Caco-2 (cell line): ENCODE measurements at regions of chr17 and their contacts with region 1.

Region 1: DNA sequence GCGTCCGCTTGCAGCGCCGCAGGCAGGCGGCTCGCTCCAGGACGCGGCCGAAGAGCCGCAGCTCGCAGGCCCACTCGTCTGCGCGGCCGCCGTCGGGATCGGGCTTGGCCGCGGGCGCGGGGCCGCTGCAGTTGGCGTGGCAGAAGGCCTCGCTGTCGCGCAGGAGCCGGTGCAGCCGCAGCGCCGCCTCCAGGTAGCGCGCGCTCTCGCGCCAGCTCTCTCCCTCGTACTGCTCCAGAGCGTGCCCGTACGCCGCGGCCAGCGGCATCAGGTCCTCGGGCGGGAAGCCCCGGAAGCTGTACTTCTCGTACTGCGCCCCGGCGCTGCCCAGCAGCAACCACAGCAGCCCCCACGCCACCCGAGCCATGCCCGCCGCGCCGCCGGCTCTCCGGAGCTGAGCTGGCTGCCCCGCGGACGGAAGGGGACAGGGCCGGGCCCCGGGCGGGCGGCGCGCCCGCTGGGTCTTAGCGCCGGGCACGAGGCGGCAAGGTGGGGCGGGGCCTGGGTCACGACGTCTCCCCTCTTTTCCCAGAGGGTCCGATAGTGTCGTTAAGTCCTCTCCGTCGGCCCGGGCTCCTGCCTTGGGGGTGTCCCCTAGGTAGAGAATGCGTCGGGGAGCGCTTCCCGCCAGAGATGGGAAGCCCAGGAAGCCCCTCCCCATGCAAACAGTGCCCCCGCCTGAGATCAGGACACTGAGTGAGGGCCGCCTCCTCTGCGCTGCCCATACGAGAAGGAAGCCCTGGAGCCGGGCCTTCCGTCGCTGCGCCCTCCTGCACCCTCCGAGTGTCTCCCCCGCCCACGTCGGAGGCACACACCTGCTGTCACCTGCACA is at the start of gene P3H4:
- DNase-seq: peak; percentile 82 to 90
- H3K4me3 ChIP-seq: peak within 1 kb of the TSS; percentile 91
- H3K4me3 Mint-ChIP-seq: peak within 1 kb of the TSS; percentile 99
- H3K27ac Mint-ChIP-seq: peak within 1 kb of the TSS; percentile 97
- H3K4me1 ChIP-seq: peaks cover 21% of the 10 kb centered on the region
- H3K4me1 Mint-ChIP-seq: peaks cover 6% of the 10 kb centered on the region
- H3K27me3 ChIP-seq: no peaks in the 10 kb centered on the region
- H3K27me3 Mint-ChIP-seq: no peaks in the 10 kb centered on the region
- CTCF ChIP-seq: peak; percentile 53 to 83
- total RNA-seq, gene P3H4: 34.1 and 39.2 TPM in 2 replicates

Region 2: DNA sequence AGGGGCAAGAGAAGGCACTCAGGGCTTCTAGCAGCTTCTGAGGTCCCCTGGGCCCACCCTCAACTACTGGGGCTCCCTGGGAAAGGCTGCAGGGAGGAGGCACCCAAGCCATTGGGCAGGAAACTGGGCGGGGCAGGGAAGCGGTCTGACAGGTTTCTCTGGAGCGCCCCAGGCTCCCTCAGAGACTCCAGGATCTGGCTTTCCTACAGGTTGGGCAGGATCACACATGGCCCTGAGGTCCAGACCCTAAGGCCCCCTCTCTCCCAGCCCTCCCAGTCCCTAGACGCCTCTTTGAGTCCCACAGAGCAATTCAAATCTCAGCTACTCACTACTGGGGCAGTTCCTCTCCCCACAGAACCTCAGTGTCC is 39.6 kb before region 1 on chr17:
- CTCF ChIA-PET with region 1: interaction called, 4 read pairs
- POLR2A ChIA-PET with region 1: interaction called, 4 read pairs
- intact Hi-C with region 1: loop called (anchors 1 kb)
- DNase-seq: peak; percentile 90 to 92
- H3K4me3 ChIP-seq: peak overlapping the region; percentile 20
- H3K4me3 Mint-ChIP-seq: peak overlapping the region; percentile 64
- H3K27ac Mint-ChIP-seq: peak overlapping the region; percentile 92
- H3K4me1 ChIP-seq: peaks cover 58% of the 10 kb centered on the region
- H3K4me1 Mint-ChIP-seq: peaks cover 41% of the 10 kb centered on the region
- H3K27me3 ChIP-seq: no peaks in the 10 kb centered on the region
- H3K27me3 Mint-ChIP-seq: no peaks in the 10 kb centered on the region
- CTCF ChIP-seq: no peak

Region 3: GRCh38 chr17:41801374-41802271 is 10.1 kb before region 1 on chr17:
- CTCF ChIA-PET with region 1: interaction called, 25 read pairs
- POLR2A ChIA-PET with region 1: interaction called, 9 read pairs
- intact Hi-C with region 1: no loop called
- DNase-seq: peak; percentile 91 to 94
- H3K4me3 ChIP-seq: peak overlapping the region; percentile 26
- H3K4me3 Mint-ChIP-seq: peak overlapping the region; percentile 83
- H3K27ac Mint-ChIP-seq: peak overlapping the region; percentile 99
- H3K4me1 ChIP-seq: peaks cover 31% of the 10 kb centered on the region
- H3K4me1 Mint-ChIP-seq: peaks cover 38% of the 10 kb centered on the region
- H3K27me3 ChIP-seq: no peaks in the 10 kb centered on the region
- H3K27me3 Mint-ChIP-seq: no peaks in the 10 kb centered on the region
- CTCF ChIP-seq: peak; percentile 97

Region 4: GRCh38 chr17:41864836-41865595 is 53.3 kb after region 1 on chr17 and contains the start of gene KLHL11:
- CTCF ChIA-PET with region 1: interaction called, 7 read pairs
- POLR2A ChIA-PET with region 1: interaction called, 6 read pairs
- intact Hi-C with region 1: loop called (anchors 1 kb)
- DNase-seq: peak; percentile 92 to 94
- H3K4me3 ChIP-seq: peak within 1 kb of the TSS; percentile 97
- H3K4me3 Mint-ChIP-seq: no peak within 1 kb of the TSS
- H3K27ac Mint-ChIP-seq: no peak within 1 kb of the TSS
- H3K4me1 ChIP-seq: peaks cover 15% of the 10 kb centered on the region
- H3K4me1 Mint-ChIP-seq: peaks cover 7% of the 10 kb centered on the region
- H3K27me3 ChIP-seq: no peaks in the 10 kb centered on the region
- H3K27me3 Mint-ChIP-seq: no peaks in the 10 kb centered on the region
- CTCF ChIP-seq: no peak
- total RNA-seq, gene KLHL11: 20.3 and 22.2 TPM in 2 replicates

Region 5: GRCh38 chr17:41930009-41930832 is 118.5 kb after region 1 on chr17 and contains the start of gene ODAD4:
- CTCF ChIA-PET with region 1: interaction called, 13 read pairs
- POLR2A ChIA-PET with region 1: interaction called, 5 read pairs
- intact Hi-C with region 1: no loop called
- DNase-seq: peak; percentile 97 to 98
- H3K4me3 ChIP-seq: peak within 1 kb of the TSS; percentile 41
- H3K4me3 Mint-ChIP-seq: peak within 1 kb of the TSS; percentile 97
- H3K27ac Mint-ChIP-seq: peak within 1 kb of the TSS; percentile 98
- H3K4me1 ChIP-seq: peaks cover 4% of the 10 kb centered on the region; the same call in 1 of the 2 replicates
- H3K4me1 Mint-ChIP-seq: peaks cover 17% of the 10 kb centered on the region
- H3K27me3 ChIP-seq: no peaks in the 10 kb centered on the region
- H3K27me3 Mint-ChIP-seq: no peaks in the 10 kb centered on the region
- CTCF ChIP-seq: peak; percentile 44 to 60
- total RNA-seq, gene ODAD4: 0.98 and 1.3 TPM in 2 replicates